ENCODE measurements at regions of chr6 and their contacts with region 1.

Region 1: DNA sequence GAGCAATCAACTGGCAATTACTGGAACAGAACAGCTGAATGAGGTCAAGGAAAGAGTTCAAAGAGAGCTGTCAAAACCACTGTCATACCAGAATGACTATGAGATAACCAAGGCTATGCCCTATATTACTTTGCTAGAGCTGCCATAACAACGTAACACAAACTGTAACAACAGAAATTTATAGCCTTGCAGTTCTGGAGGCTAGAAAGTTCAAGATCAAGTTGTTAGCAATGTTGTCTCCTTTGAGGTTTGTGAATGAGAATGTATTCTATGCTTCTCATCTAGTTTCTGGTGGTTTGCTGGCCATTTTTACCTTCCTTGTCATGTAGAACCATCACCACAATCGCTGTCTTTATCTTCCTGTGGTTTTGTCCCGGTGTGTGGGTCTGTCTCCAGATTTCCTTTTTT is 1323.0 kb upstream of the GJE1 start:
- DNase-seq: peak; percentile 72
- H3K4me3 Mint-ChIP-seq: no peak overlapping the region
- H3K27ac Mint-ChIP-seq: peak overlapping the region; percentile 79
- H3K4me1 Mint-ChIP-seq: peaks cover 7% of the 10 kb centered on the region
- H3K27me3 Mint-ChIP-seq: no peaks in the 10 kb centered on the region

Region 2: GRCh38 chr6:140572129-140572528 is 237.6 kb before region 1 on chr6:
- intact Hi-C with region 1: loop called (anchors 5 kb)
- DNase-seq: no peak
- H3K4me3 Mint-ChIP-seq: peak overlapping the region; percentile 31
- H3K27ac Mint-ChIP-seq: peak overlapping the region; percentile 76
- H3K4me1 Mint-ChIP-seq: peaks cover 19% of the 10 kb centered on the region
- H3K27me3 Mint-ChIP-seq: peaks cover 3% of the 10 kb centered on the region

Region 3: DNA sequence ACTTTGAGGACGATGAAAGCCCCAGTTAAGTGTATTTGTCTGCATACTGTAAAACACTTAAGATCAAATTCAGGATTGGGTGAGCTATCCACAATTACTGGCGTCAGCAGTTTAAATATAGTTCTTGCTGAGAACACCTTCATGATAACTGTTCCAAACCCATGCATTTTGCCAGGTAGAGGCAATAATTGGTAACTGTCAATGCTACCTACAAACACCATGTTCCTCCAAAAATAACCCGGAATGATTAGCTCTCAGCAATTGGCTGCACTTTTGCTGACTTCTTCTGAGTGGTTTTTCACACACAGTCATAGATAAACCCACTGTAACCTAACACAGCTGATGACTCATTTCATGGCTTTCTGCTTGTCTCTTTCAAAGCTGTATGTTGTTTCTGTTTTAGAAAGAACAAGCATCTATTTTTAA is 35.6 kb before region 1 on chr6:
- intact Hi-C with region 1: loop called (anchors 1 kb)
- DNase-seq: peak; percentile 61
- H3K4me3 Mint-ChIP-seq: no peak overlapping the region
- H3K27ac Mint-ChIP-seq: no peak overlapping the region
- H3K4me1 Mint-ChIP-seq: peaks cover 14% of the 10 kb centered on the region
- H3K27me3 Mint-ChIP-seq: peaks cover 11% of the 10 kb centered on the region

Region 4: GRCh38 chr6:140846503-140847261 is 37.0 kb after region 1 on chr6:
- intact Hi-C with region 1: no loop called
- DNase-seq: no peak
- H3K4me3 Mint-ChIP-seq: no peak overlapping the region
- H3K27ac Mint-ChIP-seq: no peak overlapping the region
- H3K4me1 Mint-ChIP-seq: no peaks in the 10 kb centered on the region
- H3K27me3 Mint-ChIP-seq: no peaks in the 10 kb centered on the region